Transverse colon (tissue), 4 donors: ENCODE measurements at regions of chr20 and their contacts with region 1.

Region 1: GRCh38 chr20:31943052-31943471 is 8.8 kb downstream of the PDRG1 start:
- DNase-seq: no peak
- H3K4me3 ChIP-seq: no peak overlapping the region
- H3K27ac ChIP-seq: no peak overlapping the region
- H3K4me1 ChIP-seq: peaks cover 0 to 3% (median 0%) of the 10 kb centered on the region in 4 donors
- H3K27me3 ChIP-seq: no peaks in the 10 kb centered on the region
- CTCF ChIP-seq: no peak
- EP300 ChIP-seq: no peak
- POLR2A ChIP-seq: no peak

Region 2: GRCh38 chr20:31842471-31843157 is 100.4 kb before region 1 on chr20:
- in situ Hi-C with region 1: loop called in 1 of 4 experiments (anchors 10 kb)
- intact Hi-C with region 1: no loop called
- DNase-seq: no peak
- H3K4me3 ChIP-seq: no peak overlapping the region
- H3K27ac ChIP-seq: peak overlapping the region in 1 of 4 donors; percentile 46
- H3K4me1 ChIP-seq: no peaks in the 10 kb centered on the region
- H3K27me3 ChIP-seq: no peaks in the 10 kb centered on the region
- CTCF ChIP-seq: no peak
- EP300 ChIP-seq: no peak
- POLR2A ChIP-seq: no peak

Region 3: DNA sequence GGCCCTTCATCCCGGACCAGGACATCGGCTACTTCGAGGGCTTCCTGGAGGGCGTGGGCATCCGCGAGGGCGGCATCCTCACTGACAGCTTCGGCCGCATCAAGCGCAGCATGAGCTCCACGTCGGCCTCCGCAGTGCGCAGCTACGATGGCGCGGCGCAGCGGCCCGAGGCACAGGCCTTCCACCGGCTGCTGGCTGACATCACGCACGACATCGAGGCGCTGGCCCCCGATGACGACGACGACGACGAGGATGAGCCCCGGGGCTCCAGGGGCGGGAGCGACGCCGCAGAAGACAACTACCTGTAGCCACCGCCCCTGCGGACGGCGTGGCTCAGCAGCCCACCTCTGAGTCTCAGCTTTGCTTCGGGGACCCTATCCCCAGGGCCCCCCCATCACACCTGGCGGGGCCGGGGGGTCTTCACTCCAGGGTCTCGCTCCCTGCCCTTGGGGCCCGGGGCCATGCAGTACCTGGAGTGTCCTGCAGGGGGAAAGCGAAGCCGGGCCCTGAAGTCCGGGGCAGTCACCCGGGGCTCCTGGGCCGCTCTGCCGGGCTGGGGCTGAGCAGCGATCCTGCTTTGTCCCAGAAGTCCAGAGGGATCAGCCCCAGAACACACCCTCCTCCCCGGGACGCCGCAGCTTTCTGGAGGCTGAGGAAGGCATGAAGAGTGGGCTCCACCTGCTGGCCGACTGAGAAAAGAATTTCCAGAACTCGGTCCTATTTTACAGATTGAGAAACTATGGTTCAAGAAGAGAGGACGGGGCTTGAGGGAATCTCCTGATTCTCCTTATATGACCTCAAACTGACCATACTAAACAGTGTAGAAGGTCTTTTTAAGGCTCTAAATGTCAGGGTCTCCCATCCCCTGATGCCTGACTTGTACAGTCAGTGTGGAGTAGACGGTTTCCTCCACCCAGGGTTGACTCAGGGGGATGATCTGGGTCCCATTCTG is 88.2 kb after region 1 on chr20:
- in situ Hi-C with region 1: no loop called
- intact Hi-C with region 1: no loop called
- DNase-seq: peak; percentile 75
- H3K4me3 ChIP-seq: peak overlapping the region in 2 of 4 donors; percentile 13 to 38
- H3K27ac ChIP-seq: no peak overlapping the region
- H3K4me1 ChIP-seq: peaks cover 0 to 12% (median 8%) of the 10 kb centered on the region in 4 donors
- H3K27me3 ChIP-seq: peaks cover 64% of the 10 kb centered on the region
- CTCF ChIP-seq: peak; percentile 89 to 96 (median 94)
- EP300 ChIP-seq: no peak
- POLR2A ChIP-seq: no peak